RWPE1 (cell line): ENCODE measurements at regions of chr12 and their contacts with region 1.

Region 1: GRCh38 chr12:6613776-6614512 is 6.8 kb upstream of the CHD4 start:
- DNase-seq: peak; percentile 81
- H3K27ac ChIP-seq: peak overlapping the region; percentile 97
- CTCF ChIP-seq: no peak

Region 2: GRCh38 chr12:5889381-5890047 is 724.4 kb before region 1 on chr12:
- CTCF ChIA-PET with region 1: no interaction called
- POLR2A ChIA-PET with region 1: no interaction called
- DNase-seq: peak; percentile 2
- H3K27ac ChIP-seq: no peak overlapping the region
- CTCF ChIP-seq: no peak

Region 3: DNA sequence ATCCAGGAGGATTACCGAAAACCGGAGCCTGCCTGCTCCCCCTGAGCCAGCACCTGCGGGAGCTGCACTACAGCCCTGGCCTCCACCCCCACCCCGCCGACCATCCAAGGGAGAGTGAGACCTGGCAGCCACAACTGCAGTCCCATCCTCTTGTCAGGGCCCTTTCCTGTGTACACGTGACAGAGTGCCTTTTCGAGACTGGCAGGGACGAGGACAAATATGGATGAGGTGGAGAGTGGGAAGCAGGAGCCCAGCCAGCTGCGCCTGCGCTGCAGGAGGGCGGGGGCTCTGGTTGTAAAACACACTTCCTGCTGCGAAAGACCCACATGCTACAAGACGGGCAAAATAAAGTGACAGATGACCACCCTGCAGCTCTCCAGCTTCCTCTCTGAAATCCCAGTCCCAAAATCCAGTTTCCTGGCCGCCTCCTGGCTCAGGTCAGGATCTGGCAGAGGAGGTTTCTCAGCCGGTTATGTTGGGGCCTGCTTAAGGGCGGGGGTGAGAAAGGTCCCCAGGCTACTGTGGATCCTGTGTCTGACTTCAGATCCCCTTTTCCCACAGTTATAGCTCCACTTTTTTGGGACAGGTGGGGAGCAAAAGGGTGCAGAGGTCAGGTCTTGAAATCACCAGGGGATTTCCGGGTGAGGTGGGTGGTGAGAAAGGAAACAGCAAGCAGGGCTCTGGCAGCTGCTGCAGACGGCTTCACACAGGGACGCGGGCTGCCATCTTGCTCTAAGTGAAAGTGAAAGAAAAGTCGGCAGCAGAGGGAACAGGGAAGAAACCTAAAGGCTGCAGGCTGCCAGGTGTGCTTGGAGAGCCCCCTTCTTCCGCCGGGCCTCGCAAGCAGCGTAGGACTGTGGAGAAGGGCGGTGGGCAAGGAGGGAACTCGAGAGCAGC is 162.3 kb before region 1 on chr12 and contains the start of gene TAPBPL:
- CTCF ChIA-PET with region 1: no interaction called
- POLR2A ChIA-PET with region 1: interaction called, 11 read pairs
- DNase-seq: peak; percentile 66
- H3K27ac ChIP-seq: peak within 1 kb of the TSS; percentile 90
- CTCF ChIP-seq: no peak